ENCODE measurements at regions of chr19 and their contacts with region 1.

Region 1: GRCh38 chr19:18519962-18520847 is 1.7 kb downstream of the ELL start:
- DNase-seq: peak; percentile 63
- ATAC-seq: no peak

Region 2: GRCh38 chr19:18469069-18469846 is 50.9 kb before region 1 on chr19:
- intact Hi-C with region 1: loop called (anchors 10 kb)
- DNase-seq: peak; percentile 84
- ATAC-seq: peak; percentile 33

Region 3: DNA sequence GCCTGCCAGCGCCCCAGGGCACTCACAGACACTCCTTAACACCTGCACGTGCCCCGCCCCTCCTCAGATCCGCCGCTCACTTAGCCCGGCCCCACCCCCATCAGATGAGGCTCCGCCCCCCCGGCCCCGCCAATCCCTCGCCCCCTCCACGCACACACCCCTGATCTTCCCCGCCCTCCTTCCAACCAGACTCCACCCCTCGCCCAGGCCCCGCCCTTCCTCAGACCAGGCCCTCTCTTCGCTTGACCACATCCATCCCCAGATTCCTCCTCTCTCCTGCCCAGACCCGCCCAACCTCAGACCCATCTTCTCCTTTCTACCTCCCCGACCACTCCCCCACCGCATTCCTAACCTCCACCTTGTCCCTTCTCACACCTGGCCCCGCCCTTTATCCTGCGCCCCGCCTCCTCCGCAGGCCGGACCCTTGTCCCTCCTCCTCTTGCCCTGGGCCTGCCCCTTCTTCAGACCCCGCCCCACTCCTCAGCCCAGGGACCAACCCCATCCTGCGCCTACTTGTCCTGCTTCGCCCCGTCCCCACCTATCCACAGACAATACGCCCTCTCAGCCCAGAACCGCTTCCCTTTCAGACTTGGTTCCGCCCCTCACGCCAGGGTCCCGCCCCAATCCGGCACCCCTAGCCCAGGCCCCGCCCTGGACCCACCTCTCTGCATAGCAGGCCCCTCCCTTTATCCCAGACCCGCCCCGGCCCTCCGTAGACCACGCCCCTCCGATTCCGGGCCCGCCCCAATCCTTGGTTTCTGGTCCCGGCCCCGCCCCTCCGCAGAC is 116.2 kb after region 1 on chr19:
- intact Hi-C with region 1: no loop called
- DNase-seq: peak; percentile 99
- ATAC-seq: peak; percentile 98

Region 4: DNA sequence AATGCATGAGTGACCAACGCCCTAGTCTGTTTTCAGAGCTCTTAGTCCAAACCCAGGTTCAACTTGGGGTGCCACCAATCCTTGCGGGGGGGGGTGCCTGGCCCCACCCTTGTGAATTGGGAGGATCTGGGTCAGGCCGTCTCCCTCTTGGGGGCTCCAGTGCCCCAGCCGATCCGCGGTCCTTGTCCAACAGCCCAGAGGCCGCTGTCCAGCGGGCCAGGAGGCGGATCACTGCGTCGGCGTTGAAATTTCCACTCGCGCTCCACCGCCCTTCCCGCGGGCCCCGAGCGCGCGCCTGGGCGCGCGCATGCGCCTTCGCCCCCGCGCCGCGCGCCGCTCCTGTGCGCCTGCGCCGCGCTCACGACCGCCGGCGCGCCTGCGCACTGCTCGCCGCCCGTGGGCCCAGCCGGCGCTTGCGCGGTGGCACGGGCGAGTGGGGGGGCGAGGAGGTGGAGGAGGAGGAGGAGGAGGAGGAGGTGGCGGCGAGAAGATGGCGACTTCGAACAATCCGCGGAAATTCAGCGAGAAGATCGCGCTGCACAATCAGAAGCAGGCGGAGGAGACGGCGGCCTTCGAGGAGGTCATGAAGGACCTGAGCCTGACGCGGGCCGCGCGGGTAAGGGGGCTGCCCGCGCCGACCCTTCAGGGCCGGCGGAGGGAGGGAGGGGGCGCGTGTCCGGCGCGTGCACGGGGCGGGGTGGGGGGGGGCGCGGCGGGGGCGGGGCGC is 163.2 kb after region 1 on chr19 and contains the start of gene CRTC1:
- intact Hi-C with region 1: no loop called
- DNase-seq: peak; percentile 94
- ATAC-seq: peak; percentile 92
- total RNA-seq, gene CRTC1: 10.3 TPM